Gastrocnemius medialis (tissue), 4 donors: ENCODE measurements at regions of chr4 and their contacts with region 1.

Region 1: GRCh38 chr4:55008166-55009070 is 117.0 kb downstream of the KDR start:
- DNase-seq: no peak
- ATAC-seq: no peak
- H3K4me3 ChIP-seq: no peak overlapping the region
- H3K27ac ChIP-seq: no peak overlapping the region
- H3K4me1 ChIP-seq: peaks cover 0 to 13% of the 10 kb centered on the region in 2 donors
- H3K27me3 ChIP-seq: no peaks in the 10 kb centered on the region
- CTCF ChIP-seq: peak in 1 of 5 experiments; percentile 20
- POLR2A ChIP-seq: no peak

Region 2: GRCh38 chr4:55175779-55176231 is 167.4 kb after region 1 on chr4:
- in situ Hi-C with region 1: no loop called
- intact Hi-C with region 1: no loop called
- DNase-seq: no peak
- ATAC-seq: no peak
- H3K4me3 ChIP-seq: no peak overlapping the region
- H3K27ac ChIP-seq: no peak overlapping the region
- H3K4me1 ChIP-seq: peaks cover 0 to 3% of the 10 kb centered on the region in 2 donors
- H3K27me3 ChIP-seq: no peaks in the 10 kb centered on the region
- CTCF ChIP-seq: no peak
- POLR2A ChIP-seq: no peak

Region 3: DNA sequence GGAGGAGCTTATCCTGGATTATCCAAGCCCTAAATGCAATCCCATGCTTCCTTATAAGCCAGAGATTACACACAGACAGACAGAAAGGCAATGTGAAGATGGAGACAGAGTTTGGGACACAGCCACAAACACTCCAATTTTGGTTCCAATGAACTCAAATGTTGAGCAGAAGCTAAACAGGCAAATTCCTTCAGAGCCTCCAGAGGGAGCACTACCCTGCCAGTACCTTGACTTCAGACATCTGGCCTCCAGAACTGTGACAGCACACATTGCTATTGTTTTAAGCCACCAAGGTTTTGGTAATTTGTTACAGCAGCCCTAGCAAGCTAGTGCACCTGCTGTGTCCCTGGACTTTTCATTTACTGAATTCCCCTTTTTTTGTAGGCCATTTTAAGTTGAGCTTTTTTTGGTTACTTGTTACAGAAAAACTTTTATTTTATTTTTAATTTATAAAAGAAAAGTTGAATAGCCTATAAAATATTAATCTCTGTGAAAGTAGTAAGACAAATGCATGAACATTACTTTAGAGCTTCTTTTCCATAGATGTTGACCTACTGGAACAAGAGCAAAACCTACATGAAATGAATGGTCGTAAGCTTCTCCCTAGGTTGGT is 304.2 kb after region 1 on chr4:
- in situ Hi-C with region 1: loop called in 2 of 4 experiments (anchors 10 to 25 kb)
- intact Hi-C with region 1: no loop called
- DNase-seq: peak; percentile 24 to 59
- ATAC-seq: peak; percentile 73 to 85
- H3K4me3 ChIP-seq: no peak overlapping the region
- H3K27ac ChIP-seq: peak overlapping the region in 1 of 4 donors; percentile 6
- H3K4me1 ChIP-seq: no peaks in the 10 kb centered on the region
- H3K27me3 ChIP-seq: no peaks in the 10 kb centered on the region
- CTCF ChIP-seq: peak in 2 of 5 experiments; percentile 49 to 55
- POLR2A ChIP-seq: no peak